ENCODE measurements at regions of chr15 and their contacts with region 1.

Region 1: GRCh38 chr15:75842722-75843551 is at the start of gene UBE2Q2:
- DNase-seq: no peak
- H3K4me3 ChIP-seq: peak within 1 kb of the TSS; percentile 86 to 99 (median 98)
- H3K27ac ChIP-seq: peak within 1 kb of the TSS; percentile 93 to 97 (median 96)
- H3K4me1 ChIP-seq: peaks cover 30 to 63% (median 56%) of the 10 kb centered on the region in 4 donors
- H3K27me3 ChIP-seq: no peaks in the 10 kb centered on the region
- CTCF ChIP-seq: no peak
- EP300 ChIP-seq: no peak
- POLR2A ChIP-seq: no peak
- total RNA-seq, gene UBE2Q2: 64.3 to 76.7 (median 73.3) TPM

Region 2: GRCh38 chr15:75554717-75555116 is 288.2 kb before region 1 on chr15:
- intact Hi-C with region 1: no loop called
- DNase-seq: no peak
- H3K4me3 ChIP-seq: no peak overlapping the region
- H3K27ac ChIP-seq: no peak overlapping the region
- H3K4me1 ChIP-seq: peaks cover 0 to 9% (median 6%) of the 10 kb centered on the region in 4 donors
- H3K27me3 ChIP-seq: no peaks in the 10 kb centered on the region
- CTCF ChIP-seq: no peak
- EP300 ChIP-seq: no peak
- POLR2A ChIP-seq: no peak

Region 3: GRCh38 chr15:75903331-75904239 is 60.6 kb after region 1 on chr15 and contains the start of gene FBXO22:
- intact Hi-C with region 1: loop called (anchors 5 kb)
- DNase-seq: peak; percentile 95
- H3K4me3 ChIP-seq: peak within 1 kb of the TSS; percentile 79 to 97 (median 90)
- H3K27ac ChIP-seq: peak within 1 kb of the TSS; percentile 81 to 87 (median 84)
- H3K4me1 ChIP-seq: peaks cover under 1 to 35% (median 28%) of the 10 kb centered on the region in 4 donors
- H3K27me3 ChIP-seq: no peaks in the 10 kb centered on the region
- CTCF ChIP-seq: no peak
- EP300 ChIP-seq: no peak
- POLR2A ChIP-seq: peak; percentile 44
- total RNA-seq, gene FBXO22: 10.4 to 23.8 (median 17.7) TPM

Measured in esophagus muscularis mucosa (tissue), 4 donors.